Activated naive CD4-positive, alpha-beta T cell treated with anti-CD3 and anti-CD28 coated beads, Interleukin-2, amount 10 ng/mL, durations not matched to agents 7 days and 5 days (primary cell): ENCODE measurements at regions of chr17 and their contacts with region 1.

Region 1: GRCh38 chr17:17859909-17860765 is 23.4 kb upstream of the SREBF1 start:
- DNase-seq: peak; percentile 80
- H3K4me3 Mint-ChIP-seq: no peak overlapping the region
- H3K27ac Mint-ChIP-seq: no peak overlapping the region
- H3K4me1 Mint-ChIP-seq: peaks cover 41% of the 10 kb centered on the region
- H3K27me3 Mint-ChIP-seq: no peaks in the 10 kb centered on the region

Region 2: GRCh38 chr17:17681187-17681848 is 178.8 kb before region 1 on chr17 and contains the start of gene RAI1:
- CTCF ChIA-PET with region 1: interaction called, 20 read pairs
- DNase-seq: peak; percentile 76
- H3K4me3 Mint-ChIP-seq: peak within 1 kb of the TSS; percentile 88
- H3K27ac Mint-ChIP-seq: peak within 1 kb of the TSS; percentile 85
- H3K4me1 Mint-ChIP-seq: peaks cover 37% of the 10 kb centered on the region
- H3K27me3 Mint-ChIP-seq: peaks cover 27% of the 10 kb centered on the region

Region 3: GRCh38 chr17:17812211-17813057 is 47.7 kb before region 1 on chr17:
- CTCF ChIA-PET with region 1: interaction called, 95 read pairs
- DNase-seq: peak; percentile 70
- H3K4me3 Mint-ChIP-seq: no peak overlapping the region
- H3K27ac Mint-ChIP-seq: peak overlapping the region; percentile 33
- H3K4me1 Mint-ChIP-seq: peaks cover 23% of the 10 kb centered on the region
- H3K27me3 Mint-ChIP-seq: no peaks in the 10 kb centered on the region

Region 4: DNA sequence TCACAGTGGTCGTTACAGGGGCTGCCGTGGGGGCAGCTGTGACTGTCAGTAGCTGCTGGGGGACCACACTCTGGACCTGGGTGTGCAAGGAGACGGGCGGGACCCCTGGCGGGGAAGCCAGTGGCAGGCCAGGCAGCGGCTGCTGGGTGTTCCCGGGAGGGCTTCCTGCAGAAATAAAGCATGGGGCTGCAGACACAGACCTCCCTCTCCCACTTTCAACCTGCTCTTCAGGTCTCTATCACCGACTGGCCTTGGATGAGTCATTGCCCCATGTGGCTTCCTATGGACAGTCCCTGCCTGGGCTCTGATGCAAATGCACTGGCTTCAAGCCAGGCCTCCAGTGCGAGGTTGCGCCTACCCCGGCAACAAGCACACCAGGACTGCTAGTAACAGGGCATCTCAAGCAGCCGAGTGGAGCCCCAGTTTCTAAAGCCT is 40.6 kb before region 1 on chr17:
- CTCF ChIA-PET with region 1: interaction called, 95 read pairs
- DNase-seq: peak; percentile 52
- H3K4me3 Mint-ChIP-seq: peak overlapping the region; percentile 84
- H3K27ac Mint-ChIP-seq: peak overlapping the region; percentile 82
- H3K4me1 Mint-ChIP-seq: peaks cover 66% of the 10 kb centered on the region
- H3K27me3 Mint-ChIP-seq: no peaks in the 10 kb centered on the region

Region 5: DNA sequence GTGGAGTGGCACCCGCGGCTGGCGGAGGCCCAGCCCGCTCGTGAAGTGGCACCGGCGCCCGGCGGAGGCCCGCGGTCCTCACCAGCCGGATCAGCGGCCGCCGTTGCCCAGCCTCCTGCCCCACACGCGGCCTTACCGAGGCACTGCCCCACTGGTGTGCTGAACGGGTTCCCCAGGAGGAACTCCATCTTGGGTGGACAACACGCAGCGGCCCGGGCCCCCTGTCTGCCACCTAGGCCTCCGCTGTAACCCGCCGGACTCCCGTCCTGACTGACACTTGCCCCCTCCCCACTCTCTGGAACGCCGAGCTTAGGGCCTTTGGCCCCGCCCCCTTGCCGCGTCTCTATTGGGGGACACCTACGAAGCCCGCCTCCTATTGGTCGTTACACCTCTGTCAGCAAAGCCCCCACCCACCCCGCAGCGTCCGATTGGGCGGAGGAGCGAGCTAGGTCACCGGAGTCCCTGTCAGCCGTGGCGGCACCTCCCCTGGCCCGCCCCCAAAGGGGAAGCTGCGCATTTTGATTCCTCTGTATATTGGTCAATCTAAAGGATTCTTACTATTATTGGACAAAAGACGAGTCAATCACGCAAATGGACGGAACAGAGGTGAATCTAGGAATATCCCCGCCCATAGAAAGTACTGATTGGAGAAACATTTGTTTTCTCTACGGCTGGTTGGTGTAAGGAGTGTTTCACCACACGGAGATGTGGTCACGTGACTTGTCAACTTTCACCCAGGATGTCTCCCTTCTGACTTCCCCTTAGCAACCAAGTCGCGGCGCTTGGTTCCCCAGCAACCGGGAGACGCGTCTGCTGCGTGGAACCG is 112.2 kb after region 1 on chr17 and contains the starts of genes DRC3 and TOM1L2:
- CTCF ChIA-PET with region 1: no interaction called
- DNase-seq: peak; percentile 100
- H3K4me3 Mint-ChIP-seq: peak within 1 kb of the TSS; percentile 97
- H3K27ac Mint-ChIP-seq: peak within 1 kb of the TSS; percentile 95
- H3K4me1 Mint-ChIP-seq: peaks cover 44% of the 10 kb centered on the region
- H3K27me3 Mint-ChIP-seq: peaks cover 7% of the 10 kb centered on the region